Ovary (tissue), 10 donors: ENCODE measurements at regions of chr12 and their contacts with region 1.

Region 1: DNA sequence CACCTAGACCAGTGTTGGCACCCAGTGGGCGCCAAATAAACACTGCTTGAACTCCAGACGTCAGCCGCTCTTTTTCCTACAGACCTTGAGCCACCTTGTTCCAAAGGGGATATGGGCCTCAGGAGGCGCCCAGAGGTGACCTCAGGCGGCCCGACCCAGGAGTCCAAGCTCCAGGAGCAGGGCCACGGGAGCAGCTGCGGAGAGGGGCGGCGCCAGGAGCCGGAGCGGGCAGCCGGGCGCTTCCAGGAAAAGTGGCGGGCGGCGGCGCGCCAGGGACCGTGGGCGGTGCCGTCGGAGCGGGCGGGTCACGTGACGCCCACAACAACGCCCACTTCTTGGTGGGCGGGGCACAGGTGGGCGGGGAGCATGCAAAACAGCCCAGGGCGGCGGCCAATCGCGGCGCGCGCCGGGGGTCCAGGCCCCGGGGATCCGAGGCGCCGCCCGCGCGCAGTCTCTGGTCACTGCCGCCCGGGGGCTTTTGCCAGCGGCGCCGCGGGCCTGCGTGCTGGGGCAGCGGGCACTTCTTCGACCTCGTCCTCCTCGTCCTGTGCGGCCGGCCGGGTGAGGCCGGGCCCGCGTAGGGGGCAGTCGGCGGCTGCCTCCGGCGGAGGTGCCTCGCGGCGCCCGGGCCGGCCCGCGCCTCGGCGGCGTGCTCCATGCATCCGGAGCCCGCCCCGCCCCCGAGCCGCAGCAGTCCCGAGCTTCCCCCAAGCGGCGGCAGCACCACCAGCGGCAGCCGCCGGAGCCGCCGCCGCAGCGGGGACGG is at the start of gene ORAI1:
- DNase-seq: peak; percentile 97 to 99 (median 98)
- H3K4me3 ChIP-seq: peak within 1 kb of the TSS; percentile 58
- H3K27ac ChIP-seq: peak within 1 kb of the TSS; percentile 77 to 87
- H3K4me1 ChIP-seq: peaks cover 2% of the 10 kb centered on the region
- H3K27me3 ChIP-seq: no peaks in the 10 kb centered on the region
- CTCF ChIP-seq: peak in 2 of 3 donors; percentile 65 to 69
- EP300 ChIP-seq: peak; percentile 46
- POLR2A ChIP-seq: peak; percentile 59
- total RNA-seq, gene ORAI1: 4.5 to 18.4 (median 12.3) TPM

Region 2: DNA sequence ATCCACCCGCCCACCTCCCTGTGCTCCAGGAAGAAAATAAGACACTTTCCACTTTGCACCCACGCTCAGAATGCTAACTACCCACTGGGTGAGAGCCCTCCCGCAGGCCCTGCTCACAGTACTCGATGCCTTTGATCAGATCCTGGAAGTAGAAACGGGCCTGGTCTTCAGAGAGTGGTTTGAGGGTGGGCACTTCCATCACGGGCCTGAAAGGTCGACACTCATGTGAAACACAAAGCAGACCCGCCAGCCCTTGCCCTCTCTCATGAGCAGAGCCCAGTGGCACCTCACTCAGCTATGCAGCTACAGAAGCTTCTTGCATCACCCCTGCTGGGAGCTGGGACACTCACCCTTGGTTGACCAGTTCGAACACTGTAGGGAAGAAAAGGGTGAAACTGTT is 370.8 kb before region 1 on chr12:
- intact Hi-C with region 1: no loop called
- DNase-seq: no peak
- H3K4me3 ChIP-seq: no peak overlapping the region
- H3K27ac ChIP-seq: no peak overlapping the region
- H3K4me1 ChIP-seq: no peaks in the 10 kb centered on the region
- H3K27me3 ChIP-seq: no peaks in the 10 kb centered on the region
- CTCF ChIP-seq: no peak
- EP300 ChIP-seq: no peak
- POLR2A ChIP-seq: no peak

Region 3: GRCh38 chr12:121499929-121500793 is 126.1 kb before region 1 on chr12:
- intact Hi-C with region 1: loop called in 2 of 4 experiments (anchors 1 to 5 kb)
- DNase-seq: peak; percentile 71 to 91 (median 85)
- H3K4me3 ChIP-seq: no peak overlapping the region
- H3K27ac ChIP-seq: peak overlapping the region in 1 of 2 donors; percentile 47
- H3K4me1 ChIP-seq: no peaks in the 10 kb centered on the region
- H3K27me3 ChIP-seq: no peaks in the 10 kb centered on the region
- CTCF ChIP-seq: peak; percentile 70 to 95 (median 79)
- EP300 ChIP-seq: no peak
- POLR2A ChIP-seq: no peak

Region 4: GRCh38 chr12:121536899-121537813 is 89.1 kb before region 1 on chr12:
- intact Hi-C with region 1: loop called in 1 of 4 experiments (anchors 10 kb)
- DNase-seq: peak; percentile 82 to 91 (median 89)
- H3K4me3 ChIP-seq: peak overlapping the region; percentile 54
- H3K27ac ChIP-seq: peak overlapping the region; percentile 78 to 83
- H3K4me1 ChIP-seq: peaks cover 20% of the 10 kb centered on the region
- H3K27me3 ChIP-seq: no peaks in the 10 kb centered on the region
- CTCF ChIP-seq: no peak
- EP300 ChIP-seq: no peak
- POLR2A ChIP-seq: peak; percentile 52

Region 5: GRCh38 chr12:121550974-121551634 is 75.2 kb before region 1 on chr12:
- intact Hi-C with region 1: loop called in 1 of 4 experiments (anchors 10 kb)
- DNase-seq: no peak
- H3K4me3 ChIP-seq: no peak overlapping the region
- H3K27ac ChIP-seq: no peak overlapping the region
- H3K4me1 ChIP-seq: no peaks in the 10 kb centered on the region
- H3K27me3 ChIP-seq: no peaks in the 10 kb centered on the region
- CTCF ChIP-seq: no peak
- EP300 ChIP-seq: no peak
- POLR2A ChIP-seq: no peak

Region 6: GRCh38 chr12:121579981-121580868 is 46.0 kb before region 1 on chr12:
- intact Hi-C with region 1: loop called in 1 of 4 experiments (anchors 5 kb)
- DNase-seq: peak; percentile 65 to 81 (median 76)
- H3K4me3 ChIP-seq: peak overlapping the region; percentile 43
- H3K27ac ChIP-seq: peak overlapping the region; percentile 56 to 84
- H3K4me1 ChIP-seq: peaks cover 13% of the 10 kb centered on the region
- H3K27me3 ChIP-seq: no peaks in the 10 kb centered on the region
- CTCF ChIP-seq: no peak
- EP300 ChIP-seq: no peak
- POLR2A ChIP-seq: no peak

Region 7: DNA sequence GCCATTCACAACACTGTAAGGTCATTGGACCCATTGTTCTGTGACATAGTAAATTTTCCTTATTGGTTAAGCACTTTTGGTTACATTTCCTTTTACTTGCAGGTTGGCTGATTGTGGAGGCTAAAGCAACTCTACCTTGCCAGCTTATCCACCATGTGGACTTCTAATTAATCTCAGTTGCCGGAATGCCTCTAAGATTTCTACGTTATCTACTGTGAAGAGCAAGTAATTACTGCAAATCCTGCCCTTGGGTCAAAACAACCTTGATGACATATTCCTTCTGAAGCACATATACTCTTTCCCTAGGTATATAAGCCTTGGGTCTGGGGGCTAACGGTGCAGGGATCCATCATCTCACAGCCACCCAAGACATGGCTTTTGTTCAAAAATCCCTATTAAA is 62.7 kb after region 1 on chr12:
- intact Hi-C with region 1: loop called in 1 of 4 experiments (anchors 5 kb)
- DNase-seq: no peak
- H3K4me3 ChIP-seq: no peak overlapping the region
- H3K27ac ChIP-seq: no peak overlapping the region
- H3K4me1 ChIP-seq: no peaks in the 10 kb centered on the region
- H3K27me3 ChIP-seq: no peaks in the 10 kb centered on the region
- CTCF ChIP-seq: no peak
- EP300 ChIP-seq: no peak
- POLR2A ChIP-seq: no peak